Activated CD8-positive, alpha-beta T cell treated with anti-CD3 and anti-CD28 coated beads, Interleukin-2, amount 10 ng/mL, durations not matched to agents 7 days and 5 days (primary cell): ENCODE measurements at regions of chr10 and their contacts with region 1.

Region 1: DNA sequence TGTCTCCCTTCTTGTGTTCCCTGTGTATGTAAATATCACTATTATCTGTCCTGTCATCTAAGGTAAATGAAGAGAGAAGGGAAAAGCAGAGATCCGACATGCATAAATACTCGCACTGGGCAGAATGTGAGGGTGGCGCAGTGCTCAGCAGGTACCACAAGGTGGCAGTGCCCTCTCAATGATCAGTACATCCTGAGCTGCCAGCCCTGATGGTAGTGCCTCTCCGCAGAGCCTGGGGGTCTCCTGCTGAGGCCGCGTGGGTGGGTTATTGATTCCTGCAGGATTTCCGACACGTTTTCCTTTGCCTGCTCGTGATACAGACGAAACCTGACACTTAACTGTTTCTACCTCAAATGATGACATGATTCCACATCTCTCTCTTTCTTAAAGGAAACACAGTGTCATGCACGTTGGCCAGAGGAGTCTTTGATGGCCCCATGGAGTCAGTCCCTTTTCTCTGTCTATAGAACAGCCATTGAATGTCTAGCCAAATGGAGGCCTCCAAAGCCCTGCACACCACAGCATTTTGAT is 19.8 kb downstream of the RGR start:
- DNase-seq: peak; percentile 82
- ATAC-seq: peak; percentile 97
- H3K4me3 Mint-ChIP-seq: no peak overlapping the region
- H3K27ac Mint-ChIP-seq: no peak overlapping the region
- H3K4me1 Mint-ChIP-seq: peaks cover 18% of the 10 kb centered on the region
- H3K27me3 Mint-ChIP-seq: peaks cover 18% of the 10 kb centered on the region

Region 2: DNA sequence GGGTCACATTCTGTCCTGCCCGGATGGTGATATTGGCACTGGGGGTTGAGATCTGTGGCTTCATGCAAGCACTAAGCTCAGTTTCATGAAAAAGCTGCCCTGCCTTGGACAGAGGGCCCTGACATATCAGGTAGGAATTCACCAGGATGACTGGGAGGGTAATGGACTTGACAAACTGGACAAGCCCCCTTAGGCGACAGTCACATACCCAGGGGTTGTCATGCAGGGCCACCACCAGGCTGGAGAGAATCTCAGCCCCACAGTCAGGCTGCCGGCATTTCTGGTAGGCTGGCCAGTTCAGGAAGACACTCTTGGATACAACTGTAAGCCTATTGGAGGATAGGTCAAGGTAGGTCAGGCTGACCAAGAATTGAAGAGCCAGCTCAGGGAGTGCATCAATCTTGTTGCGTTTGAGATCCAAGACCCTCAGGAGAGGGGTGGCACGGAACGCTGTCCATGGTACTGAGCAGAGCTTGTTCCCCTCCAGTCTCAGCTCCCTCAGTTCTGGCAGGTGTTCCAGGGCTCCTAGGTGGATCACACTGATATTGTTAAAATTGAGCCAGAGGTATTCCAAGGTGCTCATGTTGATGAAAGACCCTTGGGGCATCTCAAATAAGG is 40.2 kb before region 1 on chr10:
- CTCF ChIA-PET with region 1: no interaction called
- POLR2A ChIA-PET with region 1: no interaction called
- DNase-seq: peak; percentile 27
- ATAC-seq: no peak
- H3K4me3 Mint-ChIP-seq: no peak overlapping the region
- H3K27ac Mint-ChIP-seq: no peak overlapping the region
- H3K4me1 Mint-ChIP-seq: no peaks in the 10 kb centered on the region
- H3K27me3 Mint-ChIP-seq: peaks cover 11% of the 10 kb centered on the region

Region 3: GRCh38 chr10:84293574-84294016 is 28.9 kb after region 1 on chr10:
- CTCF ChIA-PET with region 1: interaction called, 14 read pairs
- POLR2A ChIA-PET with region 1: no interaction called
- DNase-seq: peak; percentile 53
- ATAC-seq: peak; percentile 76
- H3K4me3 Mint-ChIP-seq: no peak overlapping the region
- H3K27ac Mint-ChIP-seq: no peak overlapping the region
- H3K4me1 Mint-ChIP-seq: peaks cover 34% of the 10 kb centered on the region
- H3K27me3 Mint-ChIP-seq: peaks cover 25% of the 10 kb centered on the region

Region 4: GRCh38 chr10:84333864-84334451 is 69.3 kb after region 1 on chr10:
- CTCF ChIA-PET with region 1: interaction called, 28 read pairs
- POLR2A ChIA-PET with region 1: interaction called, 5 read pairs
- DNase-seq: peak; percentile 79
- ATAC-seq: peak; percentile 81
- H3K4me3 Mint-ChIP-seq: peak overlapping the region; percentile 53
- H3K27ac Mint-ChIP-seq: peak overlapping the region; percentile 81
- H3K4me1 Mint-ChIP-seq: peaks cover 49% of the 10 kb centered on the region
- H3K27me3 Mint-ChIP-seq: no peaks in the 10 kb centered on the region

Region 5: DNA sequence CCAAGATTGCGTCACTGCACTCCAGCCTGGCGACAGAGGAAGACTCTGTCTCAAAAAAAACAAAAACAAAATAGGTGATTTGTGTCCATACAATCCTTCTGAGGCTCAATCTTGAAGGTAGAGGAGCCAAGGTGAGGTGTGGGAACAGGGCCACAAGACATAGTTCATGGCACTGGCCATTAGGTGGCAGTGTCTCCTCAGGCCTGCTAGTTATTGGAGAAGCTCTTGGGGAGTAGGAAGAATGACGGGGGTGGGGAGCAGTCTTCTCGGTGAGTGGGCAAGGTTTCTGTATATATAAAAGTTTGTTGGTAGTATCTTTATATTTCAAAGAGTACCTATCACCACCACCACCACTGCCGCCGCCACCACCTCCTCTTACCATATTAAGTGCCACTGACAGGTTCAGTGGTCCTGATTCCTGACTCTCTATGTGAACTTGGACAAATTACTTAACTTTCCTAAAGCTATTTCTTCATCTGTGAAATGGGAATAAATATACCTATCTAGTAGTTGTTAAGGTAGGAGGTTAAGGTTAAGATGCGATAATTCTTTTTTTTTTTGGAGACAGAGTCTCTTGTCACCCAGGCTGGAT is 87.7 kb after region 1 on chr10:
- CTCF ChIA-PET with region 1: interaction called, 12 read pairs
- POLR2A ChIA-PET with region 1: no interaction called
- DNase-seq: peak; percentile 79
- ATAC-seq: peak; percentile 93
- H3K4me3 Mint-ChIP-seq: no peak overlapping the region
- H3K27ac Mint-ChIP-seq: no peak overlapping the region
- H3K4me1 Mint-ChIP-seq: peaks cover 54% of the 10 kb centered on the region
- H3K27me3 Mint-ChIP-seq: no peaks in the 10 kb centered on the region

Region 6: GRCh38 chr10:84429926-84430520 is 165.3 kb after region 1 on chr10:
- CTCF ChIA-PET with region 1: interaction called, 12 read pairs
- POLR2A ChIA-PET with region 1: no interaction called
- DNase-seq: peak; percentile 77
- ATAC-seq: peak; percentile 91
- H3K4me3 Mint-ChIP-seq: no peak overlapping the region
- H3K27ac Mint-ChIP-seq: no peak overlapping the region
- H3K4me1 Mint-ChIP-seq: peaks cover 9% of the 10 kb centered on the region
- H3K27me3 Mint-ChIP-seq: no peaks in the 10 kb centered on the region

Region 7: GRCh38 chr10:84478151-84478550 is 213.5 kb after region 1 on chr10:
- CTCF ChIA-PET with region 1: no interaction called
- POLR2A ChIA-PET with region 1: no interaction called
- DNase-seq: no peak
- ATAC-seq: no peak
- H3K4me3 Mint-ChIP-seq: no peak overlapping the region
- H3K27ac Mint-ChIP-seq: no peak overlapping the region
- H3K4me1 Mint-ChIP-seq: peaks cover 6% of the 10 kb centered on the region
- H3K27me3 Mint-ChIP-seq: no peaks in the 10 kb centered on the region